Left cardiac atrium (tissue), 4 donors: ENCODE measurements at regions of chr1 and their contacts with region 1.

Region 1: GRCh38 chr1:10530281-10530740 is 55.6 kb downstream of the PEX14 start:
- DNase-seq: peak; percentile 47
- ATAC-seq: peak; percentile 66 to 76

Region 2: GRCh38 chr1:10585948-10586524 is 55.7 kb after region 1 on chr1:
- intact Hi-C with region 1: no loop called
- DNase-seq: no peak
- ATAC-seq: no peak

Region 3: DNA sequence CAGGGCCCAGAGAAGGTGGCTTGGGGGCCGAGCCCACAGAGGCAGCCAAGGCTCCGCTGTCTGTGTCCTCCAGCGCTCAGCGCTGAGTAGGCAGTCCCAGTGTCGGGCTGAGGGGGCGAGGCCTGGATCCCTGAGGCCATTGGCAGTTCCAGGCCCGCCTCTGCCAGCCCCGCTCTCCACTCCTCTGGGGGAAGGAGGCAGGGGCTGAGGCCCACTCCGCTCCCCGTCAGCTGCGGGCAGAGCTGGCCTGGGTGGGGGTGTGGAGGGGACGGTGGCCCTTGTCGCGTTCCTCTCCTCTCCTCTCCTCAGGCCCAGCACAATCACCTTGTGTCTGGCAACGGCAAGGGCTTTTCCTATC is 133.3 kb after region 1 on chr1:
- intact Hi-C with region 1: loop called in 1 of 2 experiments (anchors 10 kb)
- DNase-seq: peak; percentile 65
- ATAC-seq: peak; percentile 70 to 87